Colonic mucosa (tissue), 4 donors: ENCODE measurements at regions of chr18 and their contacts with region 1.

Region 1: GRCh38 chr18:24488824-24489493 is 28.5 kb downstream of the HRH4 start:
- DNase-seq: no peak
- H3K4me3 ChIP-seq: no peak overlapping the region
- H3K27ac ChIP-seq: no peak overlapping the region
- H3K4me1 ChIP-seq: no peaks in the 10 kb centered on the region
- H3K27me3 ChIP-seq: no peaks in the 10 kb centered on the region
- CTCF ChIP-seq: peak; percentile 81

Region 2: GRCh38 chr18:24176727-24177416 is 312.1 kb before region 1 on chr18:
- intact Hi-C with region 1: loop called (anchors 5 kb)
- DNase-seq: peak; percentile 72
- H3K4me3 ChIP-seq: no peak overlapping the region
- H3K27ac ChIP-seq: no peak overlapping the region
- H3K4me1 ChIP-seq: no peaks in the 10 kb centered on the region
- H3K27me3 ChIP-seq: no peaks in the 10 kb centered on the region
- CTCF ChIP-seq: peak; percentile 60

Region 3: GRCh38 chr18:24362758-24363157 is 126.2 kb before region 1 on chr18:
- intact Hi-C with region 1: loop called (anchors 5 kb)
- DNase-seq: no peak
- H3K4me3 ChIP-seq: no peak overlapping the region
- H3K27ac ChIP-seq: no peak overlapping the region
- H3K4me1 ChIP-seq: no peaks in the 10 kb centered on the region
- H3K27me3 ChIP-seq: no peaks in the 10 kb centered on the region
- CTCF ChIP-seq: no peak

Region 4: GRCh38 chr18:24446953-24447538 is 41.9 kb before region 1 on chr18:
- intact Hi-C with region 1: loop called (anchors 5 kb)
- DNase-seq: no peak
- H3K4me3 ChIP-seq: no peak overlapping the region
- H3K27ac ChIP-seq: no peak overlapping the region
- H3K4me1 ChIP-seq: no peaks in the 10 kb centered on the region
- H3K27me3 ChIP-seq: no peaks in the 10 kb centered on the region
- CTCF ChIP-seq: peak; percentile 13

Region 5: GRCh38 chr18:24530630-24531111 is 41.7 kb after region 1 on chr18:
- intact Hi-C with region 1: no loop called
- DNase-seq: no peak
- H3K4me3 ChIP-seq: no peak overlapping the region
- H3K27ac ChIP-seq: no peak overlapping the region
- H3K4me1 ChIP-seq: no peaks in the 10 kb centered on the region
- H3K27me3 ChIP-seq: no peaks in the 10 kb centered on the region
- CTCF ChIP-seq: no peak

Region 6: GRCh38 chr18:24543805-24544498 is 55.0 kb after region 1 on chr18:
- intact Hi-C with region 1: no loop called
- DNase-seq: no peak
- H3K4me3 ChIP-seq: no peak overlapping the region
- H3K27ac ChIP-seq: no peak overlapping the region
- H3K4me1 ChIP-seq: no peaks in the 10 kb centered on the region
- H3K27me3 ChIP-seq: no peaks in the 10 kb centered on the region
- CTCF ChIP-seq: peak; percentile 21

Region 7: DNA sequence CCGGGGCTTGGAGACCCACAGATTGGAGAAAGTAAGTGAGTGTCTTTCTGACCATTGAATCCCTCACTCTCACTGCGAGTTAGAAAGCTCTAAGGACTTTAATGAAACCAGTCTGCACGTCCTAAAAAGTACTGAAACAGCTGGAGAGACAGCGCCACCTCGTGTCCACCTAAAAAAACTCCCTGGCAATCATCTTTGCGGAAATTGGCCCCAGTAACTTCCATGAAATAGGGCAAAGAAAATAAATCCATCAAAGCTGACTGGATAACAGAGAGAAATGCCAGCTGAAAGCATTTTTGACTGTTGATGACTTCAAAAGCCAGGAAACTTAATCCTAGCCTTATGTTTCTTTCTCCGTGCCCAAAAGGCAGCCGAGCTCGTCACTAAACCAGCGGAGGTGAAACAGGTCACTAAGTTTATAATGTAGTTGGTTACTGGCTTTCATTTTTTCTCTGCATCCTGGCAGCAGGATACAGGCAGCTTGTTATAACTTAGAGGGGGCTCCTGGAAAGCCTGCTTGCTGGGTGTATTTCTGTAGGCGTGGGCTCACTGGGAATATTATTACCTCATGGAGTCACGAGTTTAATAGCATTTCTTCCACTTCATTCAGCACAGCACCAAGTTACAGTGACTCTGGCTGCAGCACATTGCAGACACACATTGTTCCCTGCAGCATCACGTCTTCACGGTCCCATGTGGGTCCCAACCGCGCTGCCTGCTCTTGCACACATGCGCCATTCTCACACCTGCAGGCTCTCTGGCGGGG is 238.0 kb after region 1 on chr18:
- intact Hi-C with region 1: loop called (anchors 5 kb)
- DNase-seq: peak; percentile 57
- H3K4me3 ChIP-seq: no peak overlapping the region
- H3K27ac ChIP-seq: no peak overlapping the region
- H3K4me1 ChIP-seq: no peaks in the 10 kb centered on the region
- H3K27me3 ChIP-seq: no peaks in the 10 kb centered on the region
- CTCF ChIP-seq: peak; percentile 79

Region 8: GRCh38 chr18:25435149-25435782 is 946.3 kb after region 1 on chr18:
- intact Hi-C with region 1: no loop called
- DNase-seq: no peak
- H3K4me3 ChIP-seq: no peak overlapping the region
- H3K27ac ChIP-seq: no peak overlapping the region
- H3K4me1 ChIP-seq: no peaks in the 10 kb centered on the region
- H3K27me3 ChIP-seq: no peaks in the 10 kb centered on the region
- CTCF ChIP-seq: no peak